ENCODE measurements at regions of chr2 and their contacts with region 1.

Region 1: GRCh38 chr2:178142274-178143065 is 30.2 kb downstream of the RBM45 start:
- DNase-seq: no peak
- H3K4me3 ChIP-seq: no peak overlapping the region
- H3K27ac ChIP-seq: no peak overlapping the region
- H3K4me1 ChIP-seq: peaks cover 0 to 8% (median 2%) of the 10 kb centered on the region in 4 donors
- H3K27me3 ChIP-seq: peaks cover 18% of the 10 kb centered on the region
- CTCF ChIP-seq: no peak
- EP300 ChIP-seq: no peak
- POLR2A ChIP-seq: no peak

Region 2: GRCh38 chr2:178256382-178257042 is 114.0 kb after region 1 on chr2:
- in situ Hi-C with region 1: no loop called
- intact Hi-C with region 1: no loop called
- DNase-seq: no peak
- H3K4me3 ChIP-seq: no peak overlapping the region
- H3K27ac ChIP-seq: no peak overlapping the region
- H3K4me1 ChIP-seq: no peaks in the 10 kb centered on the region
- H3K27me3 ChIP-seq: no peaks in the 10 kb centered on the region
- CTCF ChIP-seq: no peak
- EP300 ChIP-seq: no peak
- POLR2A ChIP-seq: no peak

Region 3: DNA sequence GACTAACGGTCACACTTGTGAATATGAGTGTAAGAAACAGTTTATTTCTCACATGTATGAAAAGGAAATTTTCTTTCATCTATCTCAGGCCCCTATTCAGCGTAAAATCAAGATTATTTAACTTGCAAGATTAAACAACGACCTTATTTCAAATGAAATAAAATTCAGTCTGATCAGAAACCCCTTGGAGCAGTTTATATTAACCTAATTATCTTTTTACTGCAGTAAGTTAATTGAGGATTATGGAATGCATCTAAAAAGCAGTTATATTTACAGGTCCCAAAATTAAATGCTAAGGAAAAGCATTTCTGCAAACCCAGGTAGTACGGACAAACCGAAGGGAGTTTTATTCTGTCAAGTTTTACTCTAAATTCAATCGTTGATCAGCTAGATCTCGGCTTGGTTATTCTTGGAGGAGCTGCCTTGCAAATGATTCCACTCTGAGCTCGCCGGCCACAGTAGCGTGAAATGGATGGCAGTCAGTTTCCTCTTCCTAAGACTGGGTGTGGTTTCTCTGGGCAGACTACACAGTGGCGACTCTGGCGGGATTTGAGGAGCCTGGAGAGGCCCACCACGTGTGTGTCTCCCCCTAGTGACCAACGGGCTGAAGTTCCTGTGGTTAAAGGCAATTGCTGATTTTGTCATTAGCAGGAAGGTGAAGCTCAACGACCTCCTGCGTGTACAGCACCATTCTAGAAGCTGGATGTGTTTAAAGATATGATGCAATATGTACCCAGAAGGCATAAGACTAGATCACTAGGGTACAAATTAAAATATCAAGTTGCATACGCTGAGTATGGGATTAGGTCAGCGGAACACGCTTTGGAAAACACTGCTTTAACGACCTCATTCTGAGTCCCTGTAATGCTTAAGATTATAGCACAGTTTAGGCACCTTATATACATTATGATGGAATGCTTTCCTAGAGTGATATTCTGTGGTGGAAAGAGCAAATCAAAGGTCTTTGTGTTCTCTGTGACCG is 272.1 kb after region 1 on chr2:
- in situ Hi-C with region 1: loop called in 2 of 4 experiments (anchors 25 kb)
- intact Hi-C with region 1: no loop called
- DNase-seq: peak; percentile 90
- H3K4me3 ChIP-seq: peak overlapping the region in 3 of 4 donors; percentile 56 to 78 (median 66)
- H3K27ac ChIP-seq: peak overlapping the region; percentile 85 to 94 (median 92)
- H3K4me1 ChIP-seq: peaks cover 4 to 33% (median 7%) of the 10 kb centered on the region in 4 donors
- H3K27me3 ChIP-seq: no peaks in the 10 kb centered on the region
- CTCF ChIP-seq: peak; percentile 77 to 87 (median 83)
- EP300 ChIP-seq: no peak
- POLR2A ChIP-seq: no peak